ENCODE measurements at regions of chr4 and their contacts with region 1.

Region 1: GRCh38 chr4:156771171-156771837 is 200.3 kb downstream of the PDGFC start:
- DNase-seq: no peak
- ATAC-seq: peak in 6 of 8 donors; percentile 31 to 64 (median 48)
- H3K4me3 ChIP-seq: peak overlapping the region in 5 of 10 donors; percentile 2 to 20 (median 7)
- H3K27ac ChIP-seq: peak overlapping the region in 6 of 10 donors; percentile 2 to 61 (median 12)
- H3K4me1 ChIP-seq: peaks cover 0 to 49% (median 17%) of the 10 kb centered on the region in 9 donors
- H3K27me3 ChIP-seq: no peaks in the 10 kb centered on the region
- CTCF ChIP-seq: no peak

Region 2: DNA sequence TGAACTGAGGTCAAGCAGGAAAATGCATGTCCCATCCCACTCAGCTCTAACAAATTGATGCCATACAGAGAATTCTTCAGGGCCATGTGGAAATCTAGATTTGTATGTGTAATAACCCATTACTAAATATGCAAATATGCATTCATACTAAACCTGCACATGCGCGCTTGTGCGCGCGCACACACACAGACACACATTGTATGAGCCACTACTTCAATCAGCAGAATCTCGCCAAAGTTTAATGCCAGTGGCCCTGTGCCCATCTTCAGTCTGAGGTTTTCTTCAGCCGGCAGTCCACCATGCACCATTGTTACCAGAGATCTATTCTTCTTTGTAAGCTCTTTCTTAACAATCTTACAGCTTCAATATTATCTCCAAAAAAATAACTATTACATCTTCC is 76.1 kb before region 1 on chr4:
- intact Hi-C with region 1: no loop called
- DNase-seq: no peak
- ATAC-seq: no peak
- H3K4me3 ChIP-seq: no peak overlapping the region
- H3K27ac ChIP-seq: no peak overlapping the region
- H3K4me1 ChIP-seq: no peaks in the 10 kb centered on the region
- H3K27me3 ChIP-seq: no peaks in the 10 kb centered on the region
- CTCF ChIP-seq: no peak

Region 3: DNA sequence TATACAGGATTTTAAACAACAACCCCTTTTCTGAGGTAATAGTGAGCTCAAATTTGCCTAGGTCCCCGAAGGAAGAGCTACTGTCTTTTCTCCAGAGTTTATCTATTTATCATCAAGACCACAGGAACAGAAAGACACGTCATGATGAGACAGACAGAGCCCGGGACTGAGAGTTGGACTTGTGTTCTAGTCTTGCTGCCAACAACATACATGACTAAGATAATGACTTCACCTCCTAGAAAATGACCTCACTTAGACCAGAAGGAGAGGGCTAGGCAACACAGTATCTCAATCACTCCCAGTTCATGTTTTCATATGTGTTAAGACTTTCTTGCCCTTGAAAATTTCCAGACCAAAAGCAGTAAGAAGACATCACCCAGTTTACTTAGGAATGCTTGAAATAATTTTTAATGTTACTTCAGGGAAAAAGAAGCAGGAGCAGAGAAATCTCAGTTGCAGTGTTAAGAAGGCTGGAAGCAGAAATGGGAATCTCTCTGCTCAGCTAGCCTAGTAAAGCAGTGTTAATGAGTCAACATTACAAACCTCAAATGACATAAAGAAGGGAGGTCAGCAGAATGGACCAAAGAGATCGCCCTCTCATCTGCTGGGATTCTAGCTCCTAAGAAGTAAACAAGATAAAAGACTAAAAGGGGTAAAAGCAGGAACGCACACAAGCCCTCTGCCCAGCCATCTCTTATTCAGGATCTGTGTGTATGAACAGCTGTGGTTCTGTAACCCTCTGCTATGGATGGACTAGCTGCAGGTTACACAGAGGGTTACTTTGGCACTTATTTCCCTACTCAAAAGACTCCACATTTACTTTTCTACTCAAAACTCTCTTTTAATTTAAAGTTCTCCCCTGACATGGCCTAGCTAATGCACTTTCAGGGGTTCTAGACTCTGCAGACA is 175.5 kb after region 1 on chr4:
- intact Hi-C with region 1: loop called in 2 of 10 experiments (anchors 5 to 10 kb)
- DNase-seq: no peak
- ATAC-seq: peak in 7 of 8 donors; percentile 64 to 94 (median 71)
- H3K4me3 ChIP-seq: no peak overlapping the region
- H3K27ac ChIP-seq: peak overlapping the region in 8 of 10 donors; percentile 21 to 72 (median 54)
- H3K4me1 ChIP-seq: peaks cover 0 to 92% (median 61%) of the 10 kb centered on the region in 9 donors
- H3K27me3 ChIP-seq: no peaks in the 10 kb centered on the region
- CTCF ChIP-seq: no peak

Region 4: GRCh38 chr4:156954587-156954986 is 183.3 kb after region 1 on chr4:
- intact Hi-C with region 1: loop called in 2 of 10 experiments (anchors 5 to 10 kb)
- DNase-seq: no peak
- ATAC-seq: peak in 7 of 8 donors; percentile 50 to 80 (median 66)
- H3K4me3 ChIP-seq: no peak overlapping the region
- H3K27ac ChIP-seq: peak overlapping the region in 2 of 10 donors; percentile 30 to 51
- H3K4me1 ChIP-seq: peaks cover 0 to 71% (median 15%) of the 10 kb centered on the region in 9 donors
- H3K27me3 ChIP-seq: no peaks in the 10 kb centered on the region
- CTCF ChIP-seq: no peak

Region 5: GRCh38 chr4:157196050-157196449 is 424.7 kb after region 1 on chr4:
- intact Hi-C with region 1: no loop called
- DNase-seq: no peak
- ATAC-seq: no peak
- H3K4me3 ChIP-seq: no peak overlapping the region
- H3K27ac ChIP-seq: no peak overlapping the region
- H3K4me1 ChIP-seq: no peaks in the 10 kb centered on the region
- H3K27me3 ChIP-seq: no peaks in the 10 kb centered on the region
- CTCF ChIP-seq: no peak